HCT116 (cell line): ENCODE measurements at regions of chr15 and their contacts with region 1.

Region 1: DNA sequence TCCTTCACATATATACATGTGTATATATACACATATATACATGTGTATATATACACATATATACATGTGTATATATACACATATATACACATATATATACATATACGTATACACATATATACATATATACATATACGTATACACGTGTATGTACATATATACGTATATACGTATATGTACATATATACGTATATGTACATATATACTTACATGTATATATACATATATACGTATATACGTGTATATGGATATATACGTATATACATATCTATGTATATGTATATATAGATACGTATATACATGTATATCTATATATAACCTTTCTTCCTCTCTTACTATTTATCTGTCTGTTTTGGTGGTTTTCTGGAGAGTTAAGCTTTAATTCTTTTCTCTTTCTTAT is 114.8 kb downstream of the NR2E3 start:
- DNase-seq: no peak
- ATAC-seq: no peak
- H3K4me3 ChIP-seq: no peak overlapping the region
- H3K27ac ChIP-seq: no peak overlapping the region
- H3K4me1 ChIP-seq: no peaks in the 10 kb centered on the region
- H3K27me3 ChIP-seq: no peaks in the 10 kb centered on the region
- CTCF ChIP-seq: no peak
- POLR2A ChIP-seq: no peak
- RAD21 ChIP-seq: no peak

Region 2: DNA sequence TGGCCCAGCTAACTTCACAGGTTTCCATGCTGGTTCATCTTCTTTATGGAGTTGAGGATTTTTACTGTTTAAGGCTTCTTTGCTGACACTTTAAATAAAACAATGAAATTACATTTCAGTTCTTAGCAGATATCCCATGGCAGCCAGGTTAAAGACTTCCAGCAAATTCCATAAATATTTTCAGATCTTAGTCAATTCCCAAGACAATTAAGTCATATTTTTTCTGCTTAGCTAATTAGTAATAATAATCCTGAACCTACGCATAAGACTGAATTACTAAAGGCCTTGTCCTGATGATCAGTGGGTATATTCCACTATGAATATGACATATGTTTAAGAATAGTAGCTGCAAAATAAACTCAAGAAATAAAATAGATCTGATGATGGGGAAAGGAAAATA is 31.5 kb before region 1 on chr15:
- CTCF ChIA-PET with region 1: no interaction called
- POLR2A ChIA-PET with region 1: no interaction called
- RAD21 ChIA-PET with region 1: interaction called in 1 of 2 experiments, 4 read pairs
- intact Hi-C with region 1: loop called (anchors 2 kb)
- DNase-seq: no peak
- ATAC-seq: no peak
- H3K4me3 ChIP-seq: no peak overlapping the region
- H3K27ac ChIP-seq: no peak overlapping the region
- H3K4me1 ChIP-seq: no peaks in the 10 kb centered on the region
- H3K27me3 ChIP-seq: no peaks in the 10 kb centered on the region
- CTCF ChIP-seq: no peak
- POLR2A ChIP-seq: no peak
- RAD21 ChIP-seq: no peak